Psoas muscle (tissue), 8 donors: ENCODE measurements at regions of chr12 and their contacts with region 1.

Region 1: GRCh38 chr12:64181504-64182291 is 40.4 kb downstream of the KICS2 start:
- DNase-seq: peak in 1 of 2 donors; percentile 19
- ATAC-seq: peak; percentile 84 to 94 (median 92)
- H3K4me3 ChIP-seq: no peak overlapping the region
- H3K27ac ChIP-seq: peak overlapping the region; percentile 59
- H3K4me1 ChIP-seq: peaks cover 16% of the 10 kb centered on the region
- H3K27me3 ChIP-seq: no peaks in the 10 kb centered on the region
- CTCF ChIP-seq: peak; percentile 58

Region 2: DNA sequence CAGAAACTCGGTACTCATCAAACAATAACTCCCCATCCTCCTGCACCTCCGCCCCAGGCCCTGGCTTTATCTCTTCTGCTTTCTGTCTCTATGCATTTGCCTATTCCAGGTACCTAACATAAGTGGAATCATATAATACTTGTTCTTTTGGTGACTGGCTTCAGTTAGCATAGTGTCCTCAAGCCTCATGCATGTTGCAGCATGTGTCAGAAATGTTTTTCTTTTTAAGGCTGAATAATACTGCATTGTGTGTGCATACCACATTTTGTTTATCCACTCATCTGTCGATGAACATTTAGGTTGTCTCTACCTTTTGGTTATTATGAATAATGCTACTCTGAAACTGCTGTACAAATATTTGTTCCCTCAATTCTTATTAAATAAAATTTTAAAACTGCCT is 76.7 kb before region 1 on chr12:
- intact Hi-C with region 1: loop called in 1 of 2 experiments (anchors 5 kb)
- DNase-seq: no peak
- ATAC-seq: no peak
- H3K4me3 ChIP-seq: no peak overlapping the region
- H3K27ac ChIP-seq: no peak overlapping the region
- H3K4me1 ChIP-seq: peaks cover 12% of the 10 kb centered on the region
- H3K27me3 ChIP-seq: no peaks in the 10 kb centered on the region
- CTCF ChIP-seq: no peak

Region 3: DNA sequence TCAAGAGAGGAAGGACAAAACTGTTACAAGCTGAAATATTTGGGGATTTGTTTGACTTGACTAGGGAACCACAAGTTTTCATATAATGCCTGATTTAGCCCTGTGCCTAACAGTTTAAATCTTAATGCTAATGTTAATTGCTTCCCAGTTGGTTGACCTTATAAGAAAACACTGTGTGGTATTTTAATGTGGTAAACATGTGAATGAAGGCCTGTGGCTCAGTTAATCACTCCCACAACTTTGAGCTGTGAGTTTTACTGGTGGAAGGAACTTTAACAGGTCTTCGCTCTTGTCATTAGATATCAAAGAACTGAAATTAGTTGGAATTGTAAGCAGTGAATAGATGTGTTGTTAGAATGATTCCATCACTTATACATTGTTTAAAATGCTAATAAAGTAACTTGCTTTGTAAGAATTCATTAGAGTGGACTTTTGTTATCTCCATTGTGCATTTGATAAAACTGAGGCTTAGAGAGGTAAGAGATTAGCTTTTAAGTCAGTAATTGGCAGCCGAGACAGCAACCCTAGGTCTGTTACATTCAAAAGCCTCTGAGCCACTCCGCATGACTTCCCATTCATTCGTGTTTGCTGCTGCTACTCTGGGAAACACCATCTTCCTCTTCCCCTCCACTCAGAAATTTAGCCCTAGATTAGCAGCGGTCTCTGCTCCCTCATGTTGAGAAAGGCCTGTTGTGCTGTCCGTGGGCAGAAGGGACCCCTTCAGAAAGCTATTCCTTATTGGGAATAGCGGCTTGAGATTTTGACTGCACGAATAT is 269.2 kb after region 1 on chr12:
- intact Hi-C with region 1: no loop called
- DNase-seq: no peak
- ATAC-seq: no peak
- H3K4me3 ChIP-seq: peak overlapping the region; percentile 83
- H3K27ac ChIP-seq: peak overlapping the region; percentile 94
- H3K4me1 ChIP-seq: peaks cover 20% of the 10 kb centered on the region
- H3K27me3 ChIP-seq: no peaks in the 10 kb centered on the region
- CTCF ChIP-seq: no peak